A549 (cell line): ENCODE measurements at regions of chr17 and their contacts with region 1.

Region 1: DNA sequence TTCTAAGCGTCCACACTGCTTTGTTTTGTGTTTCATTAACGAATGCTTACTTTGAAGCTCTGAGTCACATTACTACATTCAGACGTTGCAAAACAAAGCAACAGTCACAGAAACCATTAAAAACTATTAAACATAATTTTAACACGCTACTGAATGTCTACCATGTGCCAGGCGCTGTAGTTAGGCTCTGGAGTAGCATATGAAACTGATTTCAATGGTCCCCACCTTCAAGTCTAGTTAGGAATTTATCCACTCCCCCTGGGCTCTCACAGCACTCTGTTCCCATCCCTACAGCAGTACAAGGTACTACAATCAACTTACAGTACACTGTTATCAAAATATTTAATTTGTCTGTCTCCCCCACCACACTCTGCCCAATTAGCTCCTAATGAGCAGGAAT is 631 bp downstream of the UTP6 start:
- DNase-seq: peak in 1 of 2 experiments; percentile 41
- ATAC-seq: peak; percentile 40 to 47; a peak in 5 of 6 replicates
- H3K4me3 ChIP-seq: peak overlapping the region; percentile 79
- H3K27ac ChIP-seq: peak overlapping the region; percentile 82 to 87
- H3K4me1 ChIP-seq: peaks cover 9% of the 10 kb centered on the region; the same call in 1 of the 3 replicates
- CTCF ChIP-seq: no peak
- EP300 ChIP-seq: no peak
- POLR2A ChIP-seq: no peak
- RAD21 ChIP-seq: no peak

Region 2: DNA sequence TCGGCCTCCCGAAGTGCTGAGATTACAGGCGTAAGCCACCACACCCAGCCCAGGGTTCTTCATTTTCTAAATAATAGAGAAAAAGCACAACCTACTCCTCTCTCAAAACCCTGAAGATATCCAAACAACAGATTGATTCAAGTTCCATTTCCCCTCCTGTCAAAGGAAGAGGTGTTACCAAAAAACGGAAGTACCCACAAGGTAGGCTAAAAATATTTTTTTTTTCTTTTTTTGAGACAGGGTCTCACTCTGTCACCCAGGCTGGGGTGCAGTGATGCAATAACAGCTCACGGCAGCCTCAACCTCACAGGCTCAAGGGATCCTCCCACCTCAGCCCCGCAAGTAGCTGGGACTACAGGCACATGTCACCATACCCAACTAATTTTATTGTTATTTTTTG is 18.3 kb before region 1 on chr17:
- CTCF ChIA-PET with region 1: interaction called, 13 read pairs
- POLR2A ChIA-PET with region 1: interaction called, 5 read pairs
- DNase-seq: no peak
- ATAC-seq: no peak
- H3K4me3 ChIP-seq: no peak overlapping the region
- H3K27ac ChIP-seq: no peak overlapping the region
- H3K4me1 ChIP-seq: no peaks in the 10 kb centered on the region
- CTCF ChIP-seq: no peak
- EP300 ChIP-seq: no peak
- POLR2A ChIP-seq: no peak
- RAD21 ChIP-seq: no peak

Region 3: GRCh38 chr17:31915456-31916100 is 14.7 kb after region 1 on chr17:
- CTCF ChIA-PET with region 1: interaction called, 48 read pairs
- POLR2A ChIA-PET with region 1: interaction called, 6 read pairs
- DNase-seq: no peak
- ATAC-seq: no peak
- H3K4me3 ChIP-seq: no peak overlapping the region
- H3K27ac ChIP-seq: no peak overlapping the region
- H3K4me1 ChIP-seq: 0 out of 3 replicates have a peak, but pooled peaks cover 3% of the 10 kb centered on the region
- CTCF ChIP-seq: no peak
- EP300 ChIP-seq: no peak
- POLR2A ChIP-seq: no peak
- RAD21 ChIP-seq: no peak